CD4-positive, alpha-beta T cell (primary cell): ENCODE measurements at regions of chr1 and their contacts with region 1.

Region 1: GRCh38 chr1:192916021-192916420 is 107.2 kb downstream of the RGS2 start:
- DNase-seq: no peak
- ATAC-seq: no peak
- H3K4me3 ChIP-seq: no peak overlapping the region
- H3K4me3 Mint-ChIP-seq: no peak overlapping the region
- H3K27ac ChIP-seq: no peak overlapping the region
- H3K27ac Mint-ChIP-seq: no peak overlapping the region
- H3K4me1 ChIP-seq: no peaks in the 10 kb centered on the region
- H3K4me1 Mint-ChIP-seq: no peaks in the 10 kb centered on the region
- H3K27me3 ChIP-seq: no peaks in the 10 kb centered on the region
- H3K27me3 Mint-ChIP-seq: no peaks in the 10 kb centered on the region
- CTCF ChIP-seq: no peak

Region 2: GRCh38 chr1:192739476-192740184 is 176.4 kb before region 1 on chr1:
- CTCF ChIA-PET with region 1: no interaction called
- POLR2A ChIA-PET with region 1: no interaction called
- intact Hi-C with region 1: no loop called
- DNase-seq: no peak
- ATAC-seq: no peak
- H3K4me3 ChIP-seq: no peak overlapping the region
- H3K4me3 Mint-ChIP-seq: no peak overlapping the region
- H3K27ac ChIP-seq: no peak overlapping the region
- H3K27ac Mint-ChIP-seq: no peak overlapping the region
- H3K4me1 ChIP-seq: no peaks in the 10 kb centered on the region
- H3K4me1 Mint-ChIP-seq: no peaks in the 10 kb centered on the region
- H3K27me3 ChIP-seq: no peaks in the 10 kb centered on the region
- H3K27me3 Mint-ChIP-seq: no peaks in the 10 kb centered on the region
- CTCF ChIP-seq: no peak

Region 3: DNA sequence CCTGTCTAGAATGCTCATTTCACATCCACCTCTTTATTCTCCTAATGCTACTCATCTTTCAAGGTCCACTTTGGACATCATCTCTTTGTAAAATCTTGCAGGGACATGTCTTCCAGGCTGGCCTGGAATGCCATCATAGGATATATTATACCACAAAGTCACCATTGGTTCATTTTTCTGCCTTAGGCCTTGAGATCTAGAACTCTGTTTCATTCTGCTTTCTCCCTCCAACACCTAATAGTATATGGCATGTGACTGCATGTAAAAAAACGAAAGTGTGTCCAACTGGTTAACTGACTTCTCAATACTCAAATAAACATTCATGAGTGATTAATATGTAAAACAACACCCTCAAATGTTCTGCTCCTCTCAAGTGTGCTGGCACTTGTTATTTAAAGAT is 23.1 kb before region 1 on chr1:
- CTCF ChIA-PET with region 1: no interaction called
- POLR2A ChIA-PET with region 1: no interaction called
- intact Hi-C with region 1: loop called in 1 of 2 experiments (anchors 2 kb)
- DNase-seq: no peak
- ATAC-seq: no peak
- H3K4me3 ChIP-seq: no peak overlapping the region
- H3K4me3 Mint-ChIP-seq: no peak overlapping the region
- H3K27ac ChIP-seq: no peak overlapping the region
- H3K27ac Mint-ChIP-seq: no peak overlapping the region
- H3K4me1 ChIP-seq: no peaks in the 10 kb centered on the region
- H3K4me1 Mint-ChIP-seq: no peaks in the 10 kb centered on the region
- H3K27me3 ChIP-seq: no peaks in the 10 kb centered on the region
- H3K27me3 Mint-ChIP-seq: no peaks in the 10 kb centered on the region
- CTCF ChIP-seq: no peak

Region 4: DNA sequence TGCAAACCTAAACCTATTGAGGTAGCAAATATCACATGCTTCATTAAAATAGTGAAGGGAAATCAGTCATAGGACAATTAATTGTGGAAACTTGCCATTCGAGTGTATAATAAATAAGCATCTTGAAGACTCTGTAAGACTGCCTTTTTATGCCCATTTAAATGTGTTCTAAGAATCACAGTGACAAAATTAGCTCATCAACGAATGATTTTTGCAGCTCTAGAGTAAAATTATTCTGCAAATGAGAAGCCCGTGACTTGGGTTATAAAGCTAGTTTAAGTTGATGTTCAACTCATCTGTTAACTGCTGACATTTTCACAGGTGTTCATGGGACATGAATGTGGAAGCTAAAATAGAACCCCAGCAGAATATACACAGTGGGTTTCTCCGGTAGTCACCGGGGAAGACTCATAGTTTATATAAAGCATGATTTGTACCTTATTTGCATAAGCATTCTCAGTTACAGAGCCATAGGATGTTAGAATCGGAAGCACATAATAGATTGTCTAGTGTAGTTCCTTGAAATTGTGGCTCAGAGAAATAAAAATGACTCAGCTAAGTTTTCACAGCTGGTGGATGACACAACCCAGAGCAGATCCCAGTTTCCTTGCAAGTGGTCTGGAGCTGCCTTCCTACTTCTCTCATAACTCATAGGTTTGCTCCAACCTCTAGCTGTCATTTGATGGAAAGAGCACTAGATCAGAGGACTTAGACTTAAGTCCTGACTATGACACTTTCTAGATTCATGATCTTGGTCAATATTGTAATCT is 35.9 kb after region 1 on chr1:
- CTCF ChIA-PET with region 1: no interaction called
- POLR2A ChIA-PET with region 1: no interaction called
- intact Hi-C with region 1: no loop called
- DNase-seq: peak in 2 of 14 experiments; percentile 42 to 52
- ATAC-seq: no peak
- H3K4me3 ChIP-seq: no peak overlapping the region
- H3K4me3 Mint-ChIP-seq: no peak overlapping the region
- H3K27ac ChIP-seq: no peak overlapping the region
- H3K27ac Mint-ChIP-seq: no peak overlapping the region
- H3K4me1 ChIP-seq: no peaks in the 10 kb centered on the region
- H3K4me1 Mint-ChIP-seq: no peaks in the 10 kb centered on the region
- H3K27me3 ChIP-seq: no peaks in the 10 kb centered on the region
- H3K27me3 Mint-ChIP-seq: no peaks in the 10 kb centered on the region
- CTCF ChIP-seq: no peak

Region 5: GRCh38 chr1:193700710-193701355 is 784.8 kb after region 1 on chr1:
- CTCF ChIA-PET with region 1: no interaction called
- POLR2A ChIA-PET with region 1: no interaction called
- intact Hi-C with region 1: no loop called
- DNase-seq: no peak
- ATAC-seq: no peak
- H3K4me3 ChIP-seq: no peak overlapping the region
- H3K4me3 Mint-ChIP-seq: no peak overlapping the region
- H3K27ac ChIP-seq: no peak overlapping the region
- H3K27ac Mint-ChIP-seq: no peak overlapping the region
- H3K4me1 ChIP-seq: no peaks in the 10 kb centered on the region
- H3K4me1 Mint-ChIP-seq: peaks cover 14% of the 10 kb centered on the region
- H3K27me3 ChIP-seq: no peaks in the 10 kb centered on the region
- H3K27me3 Mint-ChIP-seq: no peaks in the 10 kb centered on the region
- CTCF ChIP-seq: no peak